Transverse colon (tissue), 4 donors: ENCODE measurements at regions of chr17 and their contacts with region 1.

Region 1: DNA sequence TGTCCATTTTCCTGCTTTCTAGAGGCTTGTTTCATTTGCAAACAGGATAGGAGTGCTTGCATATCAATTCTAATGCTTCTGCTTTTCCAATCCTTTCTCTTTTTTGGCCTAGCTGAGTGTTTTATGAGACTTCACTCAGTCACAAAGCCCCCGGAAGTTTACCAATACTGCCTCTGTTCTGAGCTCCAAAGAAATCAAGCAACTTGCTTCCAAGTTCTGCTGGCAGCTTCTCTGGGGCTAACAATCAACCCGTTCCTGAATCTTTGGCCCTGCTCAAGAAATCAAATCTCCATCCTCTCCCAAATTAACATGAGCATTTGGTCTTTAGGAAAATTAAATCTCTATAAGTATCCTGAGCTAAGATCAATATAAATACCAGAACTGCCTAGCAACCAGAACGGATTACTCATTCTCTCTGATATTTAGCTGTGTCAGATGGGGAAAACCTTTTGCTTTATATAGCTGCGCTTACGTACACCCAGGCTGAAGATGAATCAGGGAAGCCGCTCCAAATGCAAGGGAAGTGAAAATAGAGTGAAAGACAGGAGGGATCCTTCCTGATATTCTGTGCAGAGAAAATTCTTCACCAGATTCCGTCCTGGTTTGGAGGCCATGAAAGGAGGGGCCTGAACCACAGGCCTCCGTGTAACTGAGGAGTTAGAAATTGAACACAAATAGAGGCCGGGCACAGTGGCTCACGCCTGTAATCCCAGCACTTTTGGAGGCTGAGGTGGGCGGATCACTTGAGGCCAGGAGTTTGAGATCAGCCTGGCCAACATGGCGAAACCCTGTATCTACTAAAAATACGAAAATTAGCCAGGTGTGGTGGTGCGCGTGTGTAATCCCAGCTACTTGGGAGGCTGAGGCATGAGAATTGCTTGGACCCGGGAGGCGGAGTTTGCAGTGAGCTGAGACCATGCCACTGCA is 23.3 kb upstream of the GRB2 start:
- DNase-seq: no peak
- H3K4me3 ChIP-seq: no peak overlapping the region
- H3K27ac ChIP-seq: peak overlapping the region; percentile 67 to 76 (median 72)
- H3K4me1 ChIP-seq: peaks cover 4 to 27% (median 7%) of the 10 kb centered on the region in 4 donors
- H3K27me3 ChIP-seq: no peaks in the 10 kb centered on the region
- CTCF ChIP-seq: no peak
- EP300 ChIP-seq: no peak
- POLR2A ChIP-seq: no peak

Region 2: DNA sequence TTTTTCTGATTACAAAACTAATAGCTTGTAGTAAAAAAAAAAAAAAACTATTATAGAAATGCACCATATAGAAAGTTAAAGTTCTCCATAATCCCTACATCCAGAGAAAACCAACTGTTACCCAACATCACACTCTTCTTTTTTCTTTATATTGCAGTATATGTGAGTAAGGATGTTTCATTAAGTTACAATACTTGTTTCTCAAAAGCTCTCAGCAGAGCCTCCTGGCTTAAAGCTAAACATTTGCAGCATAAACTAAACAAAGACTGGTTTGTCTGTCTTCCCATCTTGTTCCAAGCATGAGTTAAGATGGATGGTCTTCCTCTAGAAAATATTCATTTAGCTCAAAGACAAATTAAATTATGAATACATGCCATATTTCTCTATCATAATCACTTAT is 48.5 kb before region 1 on chr17:
- in situ Hi-C with region 1: no loop called
- intact Hi-C with region 1: no loop called
- DNase-seq: no peak
- H3K4me3 ChIP-seq: no peak overlapping the region
- H3K27ac ChIP-seq: peak overlapping the region in 1 of 4 donors; percentile 9
- H3K4me1 ChIP-seq: peaks cover 10 to 62% (median 31%) of the 10 kb centered on the region in 4 donors
- H3K27me3 ChIP-seq: no peaks in the 10 kb centered on the region
- CTCF ChIP-seq: no peak
- EP300 ChIP-seq: no peak
- POLR2A ChIP-seq: no peak

Region 3: DNA sequence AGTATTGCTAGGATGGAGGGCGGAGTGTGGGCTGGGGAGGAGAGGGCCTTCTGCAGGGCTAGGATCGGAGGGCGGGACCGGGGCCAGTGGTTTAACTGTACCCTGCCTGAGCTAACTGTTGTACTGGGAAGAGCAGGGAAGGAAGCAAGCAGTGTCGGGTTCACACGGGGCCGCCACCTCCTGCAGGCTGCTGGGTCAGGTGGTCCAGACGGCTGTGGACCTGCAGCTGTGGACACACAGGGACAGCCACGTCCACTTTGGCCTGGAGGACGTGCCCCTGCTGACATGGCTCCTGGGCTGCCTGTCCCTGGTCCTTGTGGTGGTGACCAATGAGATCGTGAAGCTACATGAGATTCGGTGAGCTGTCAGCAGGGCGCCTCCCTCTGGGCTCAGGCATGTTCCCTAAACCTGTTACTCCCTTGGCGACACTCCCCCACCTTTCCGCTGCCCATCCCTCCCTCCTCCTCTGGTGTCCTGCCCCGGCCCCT is 70.0 kb after region 1 on chr17:
- in situ Hi-C with region 1: loop called in 1 of 4 experiments (anchors 10 kb)
- intact Hi-C with region 1: no loop called
- DNase-seq: no peak
- H3K4me3 ChIP-seq: no peak overlapping the region
- H3K27ac ChIP-seq: no peak overlapping the region
- H3K4me1 ChIP-seq: no peaks in the 10 kb centered on the region
- H3K27me3 ChIP-seq: no peaks in the 10 kb centered on the region
- CTCF ChIP-seq: no peak
- EP300 ChIP-seq: no peak
- POLR2A ChIP-seq: no peak

Region 4: GRCh38 chr17:75515496-75516254 is 86.9 kb after region 1 on chr17 and contains the start of gene CASKIN2:
- in situ Hi-C with region 1: loop called in 1 of 4 experiments (anchors 10 kb)
- intact Hi-C with region 1: loop called (anchors 5 kb)
- DNase-seq: peak; percentile 97
- H3K4me3 ChIP-seq: peak within 1 kb of the TSS; percentile 73 to 96 (median 92)
- H3K27ac ChIP-seq: peak within 1 kb of the TSS; percentile 87 to 93 (median 90)
- H3K4me1 ChIP-seq: peaks cover 22 to 57% (median 41%) of the 10 kb centered on the region in 4 donors
- H3K27me3 ChIP-seq: no peaks in the 10 kb centered on the region
- CTCF ChIP-seq: peak; percentile 97 to 100 (median 99)
- EP300 ChIP-seq: no peak
- POLR2A ChIP-seq: no peak
- total RNA-seq, gene CASKIN2: 16.5 to 128 (median 24.8) TPM

Region 5: GRCh38 chr17:75589919-75590303 is 161.1 kb after region 1 on chr17:
- in situ Hi-C with region 1: loop called in 1 of 4 experiments (anchors 10 kb)
- intact Hi-C with region 1: loop called (anchors 5 kb)
- DNase-seq: peak; percentile 36
- H3K4me3 ChIP-seq: peak overlapping the region in 2 of 4 donors; percentile 57
- H3K27ac ChIP-seq: peak overlapping the region; percentile 84 to 93 (median 89)
- H3K4me1 ChIP-seq: peaks cover 9 to 28% (median 22%) of the 10 kb centered on the region in 4 donors
- H3K27me3 ChIP-seq: no peaks in the 10 kb centered on the region
- CTCF ChIP-seq: no peak
- EP300 ChIP-seq: no peak
- POLR2A ChIP-seq: no peak